Astrocyte of the cerebellum (primary cell): ENCODE measurements at regions of chr17 and their contacts with region 1.

Region 1: GRCh38 chr17:10729334-10730193 is at the start of gene TMEM220:
- DNase-seq: peak; percentile 36
- H3K4me3 ChIP-seq: peak within 1 kb of the TSS; percentile 59
- CTCF ChIP-seq: no peak

Region 2: GRCh38 chr17:10697092-10698081 is 32.2 kb before region 1 on chr17 and contains the starts of genes ADPRM and SCO1:
- in situ Hi-C with region 1: loop called (anchors 5 kb)
- DNase-seq: peak; percentile 84
- H3K4me3 ChIP-seq: peak within 1 kb of the TSS; percentile 79
- CTCF ChIP-seq: peak; percentile 60